ENCODE measurements at regions of chr10 and their contacts with region 1.

Region 1: DNA sequence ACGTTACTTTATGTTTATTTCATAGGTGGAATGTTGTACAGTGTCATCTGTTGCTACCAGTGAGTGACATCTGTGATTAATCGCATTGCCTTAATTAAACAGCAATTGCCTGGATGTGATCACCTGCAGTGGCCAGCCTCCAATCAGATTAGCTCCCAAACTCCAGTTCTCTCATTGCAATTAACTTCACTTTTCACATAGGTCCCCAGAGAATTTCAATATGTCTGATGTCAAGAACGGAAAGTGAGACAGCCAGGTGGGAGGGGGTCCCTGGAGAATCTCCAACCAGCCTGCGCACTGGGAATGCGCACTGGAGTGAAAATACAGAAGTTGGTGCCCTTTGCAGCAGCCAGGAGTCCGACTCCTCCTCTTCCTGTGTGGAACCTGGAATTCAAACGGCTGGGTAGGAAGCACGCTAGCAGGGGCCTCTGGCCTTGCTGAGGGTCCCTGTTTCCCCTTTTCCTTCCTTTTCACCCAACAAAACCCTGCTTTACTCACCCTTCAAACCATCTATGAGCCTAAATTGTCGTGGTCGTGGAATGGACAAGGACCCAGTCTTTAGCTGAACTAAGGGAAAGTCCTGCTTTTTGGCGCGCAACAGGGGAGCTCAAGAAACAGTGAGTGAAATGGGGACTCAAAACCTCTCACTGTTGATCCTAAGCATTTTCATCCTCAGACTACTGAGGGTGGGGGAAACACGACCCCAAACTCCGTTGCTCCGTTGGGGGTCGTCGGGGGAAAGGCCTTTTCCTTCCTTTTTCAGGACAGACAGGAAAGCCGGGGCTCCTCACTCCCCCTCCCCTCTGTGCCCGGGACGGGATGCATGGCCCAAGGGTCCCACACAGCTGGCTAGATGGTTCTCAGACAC is 1355.5 kb upstream of the LRRTM3 start:
- DNase-seq: peak; percentile 49 to 71
- H3K4me3 ChIP-seq: peak overlapping the region; percentile 79
- H3K27ac ChIP-seq: 0 out of 2 replicates have a peak overlapping the region, but pooled peaks have one; percentile 14
- H3K4me1 ChIP-seq: peaks cover 16% of the 10 kb centered on the region
- H3K27me3 ChIP-seq: no peaks in the 10 kb centered on the region
- CTCF ChIP-seq: no peak

Region 2: GRCh38 chr10:65377687-65378086 is 192.7 kb before region 1 on chr10:
- CTCF ChIA-PET with region 1: no interaction called
- POLR2A ChIA-PET with region 1: no interaction called
- intact Hi-C with region 1: no loop called
- DNase-seq: peak in 1 of 2 experiments; percentile 16
- H3K4me3 ChIP-seq: no peak overlapping the region
- H3K27ac ChIP-seq: no peak overlapping the region
- H3K4me1 ChIP-seq: no peaks in the 10 kb centered on the region
- H3K27me3 ChIP-seq: no peaks in the 10 kb centered on the region
- CTCF ChIP-seq: no peak

Region 3: DNA sequence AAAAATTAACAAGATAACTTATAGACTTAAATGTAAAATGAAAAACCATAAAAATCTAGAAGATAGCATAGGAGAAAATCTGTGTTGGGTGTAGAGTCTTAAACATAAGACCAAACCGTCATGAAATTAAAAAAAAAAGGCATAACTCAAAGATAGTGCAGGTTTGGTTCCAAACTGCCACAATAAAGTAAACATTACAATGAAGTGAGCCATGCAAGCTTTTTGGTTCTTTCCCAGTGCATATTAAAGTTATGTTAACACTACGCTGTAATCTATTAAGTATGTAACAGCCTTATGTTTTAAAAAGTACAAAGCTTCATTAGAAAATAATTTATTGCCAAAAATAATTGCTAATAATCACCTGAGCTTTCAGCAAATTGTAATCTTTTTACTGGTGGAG is 11.0 kb before region 1 on chr10:
- CTCF ChIA-PET with region 1: no interaction called
- POLR2A ChIA-PET with region 1: interaction called, 10 read pairs
- intact Hi-C with region 1: no loop called
- DNase-seq: no peak
- H3K4me3 ChIP-seq: no peak overlapping the region
- H3K27ac ChIP-seq: no peak overlapping the region
- H3K4me1 ChIP-seq: no peaks in the 10 kb centered on the region
- H3K27me3 ChIP-seq: no peaks in the 10 kb centered on the region
- CTCF ChIP-seq: no peak

Region 4: DNA sequence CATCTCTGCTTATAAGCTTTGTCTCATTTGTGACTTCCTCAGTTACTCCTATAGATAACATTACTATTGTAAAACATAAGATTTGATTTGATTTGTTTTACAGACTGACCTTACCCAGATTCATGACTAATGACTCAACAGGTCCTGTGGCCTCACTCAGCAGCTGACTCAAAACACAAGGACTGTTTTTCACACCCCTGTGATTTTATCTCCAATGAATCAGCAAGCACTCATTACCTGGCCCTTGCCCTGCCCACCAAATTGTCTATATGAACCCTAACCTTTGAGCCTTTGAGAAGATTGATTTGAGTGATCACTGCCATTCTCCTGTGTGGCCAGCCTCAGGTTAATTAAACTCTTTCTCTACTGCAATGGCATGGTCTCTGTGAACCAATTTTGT is 290.9 kb after region 1 on chr10:
- CTCF ChIA-PET with region 1: no interaction called
- POLR2A ChIA-PET with region 1: no interaction called
- intact Hi-C with region 1: loop called (anchors 10 kb)
- DNase-seq: peak; percentile 51 to 78
- H3K4me3 ChIP-seq: no peak overlapping the region
- H3K27ac ChIP-seq: peak overlapping the region; percentile 41
- H3K4me1 ChIP-seq: peaks cover 18% of the 10 kb centered on the region
- H3K27me3 ChIP-seq: no peaks in the 10 kb centered on the region
- CTCF ChIP-seq: no peak